ENCODE measurements at regions of chr1 and their contacts with region 1.

Region 1: GRCh38 chr1:240027059-240027462 is 64.6 kb upstream of the FMN2 start:
- DNase-seq: peak; percentile 22
- ATAC-seq: peak; percentile 82
- H3K4me3 ChIP-seq: no peak overlapping the region
- H3K27ac ChIP-seq: no peak overlapping the region
- H3K4me1 ChIP-seq: no peaks in the 10 kb centered on the region
- H3K27me3 ChIP-seq: no peaks in the 10 kb centered on the region
- CTCF ChIP-seq: peak; percentile 93

Region 2: GRCh38 chr1:239763850-239764249 is 263.2 kb before region 1 on chr1:
- CTCF ChIA-PET with region 1: no interaction called
- POLR2A ChIA-PET with region 1: no interaction called
- in situ Hi-C with region 1: no loop called
- intact Hi-C with region 1: no loop called
- DNase-seq: no peak
- ATAC-seq: no peak
- H3K4me3 ChIP-seq: no peak overlapping the region
- H3K27ac ChIP-seq: no peak overlapping the region
- H3K4me1 ChIP-seq: no peaks in the 10 kb centered on the region
- H3K27me3 ChIP-seq: no peaks in the 10 kb centered on the region
- CTCF ChIP-seq: no peak

Region 3: GRCh38 chr1:239841631-239842030 is 185.4 kb before region 1 on chr1:
- CTCF ChIA-PET with region 1: no interaction called
- POLR2A ChIA-PET with region 1: no interaction called
- in situ Hi-C with region 1: no loop called
- intact Hi-C with region 1: no loop called
- DNase-seq: no peak
- ATAC-seq: no peak
- H3K4me3 ChIP-seq: no peak overlapping the region
- H3K27ac ChIP-seq: no peak overlapping the region
- H3K4me1 ChIP-seq: no peaks in the 10 kb centered on the region
- H3K27me3 ChIP-seq: no peaks in the 10 kb centered on the region
- CTCF ChIP-seq: no peak

Region 4: GRCh38 chr1:240122639-240123613 is 95.9 kb after region 1 on chr1:
- CTCF ChIA-PET with region 1: no interaction called
- POLR2A ChIA-PET with region 1: no interaction called
- in situ Hi-C with region 1: no loop called
- intact Hi-C with region 1: no loop called
- DNase-seq: no peak
- ATAC-seq: peak; percentile 53
- H3K4me3 ChIP-seq: no peak overlapping the region; a peak in 1 of 4 replicates
- H3K27ac ChIP-seq: no peak overlapping the region
- H3K4me1 ChIP-seq: no peaks in the 10 kb centered on the region
- H3K27me3 ChIP-seq: no peaks in the 10 kb centered on the region
- CTCF ChIP-seq: no peak

Region 5: DNA sequence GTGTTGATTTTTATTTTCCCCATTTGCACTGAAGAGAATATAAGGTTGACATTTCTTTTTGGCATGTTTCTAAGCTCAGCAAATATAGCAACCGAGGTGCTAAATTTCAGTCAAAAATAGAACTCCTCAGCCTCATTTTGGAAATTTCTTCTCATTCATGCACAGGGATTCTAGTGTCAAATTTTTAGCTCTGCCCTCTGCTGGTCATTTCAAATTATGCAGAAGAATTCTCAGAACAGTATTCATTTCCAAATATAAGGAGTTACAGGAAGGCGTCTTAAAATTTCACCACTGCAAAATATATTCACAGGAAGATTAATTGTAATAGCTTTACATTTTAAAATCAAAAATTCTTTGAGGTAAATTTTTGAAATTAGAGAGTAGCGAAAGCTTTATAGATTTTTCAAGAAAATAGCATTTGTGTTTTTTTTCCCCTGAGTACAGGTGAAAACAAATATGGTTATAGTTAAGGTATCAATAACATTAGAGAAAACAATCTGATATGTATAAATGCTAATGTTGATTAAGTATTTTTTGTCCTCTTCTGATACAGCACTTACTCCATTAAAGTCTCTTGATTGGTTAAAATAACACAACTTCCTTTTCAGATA is 122.5 kb after region 1 on chr1:
- CTCF ChIA-PET with region 1: interaction called, 3 read pairs
- POLR2A ChIA-PET with region 1: no interaction called
- in situ Hi-C with region 1: no loop called
- intact Hi-C with region 1: loop called (anchors 1 kb)
- DNase-seq: peak; percentile 10
- ATAC-seq: no peak
- H3K4me3 ChIP-seq: no peak overlapping the region
- H3K27ac ChIP-seq: no peak overlapping the region
- H3K4me1 ChIP-seq: no peaks in the 10 kb centered on the region
- H3K27me3 ChIP-seq: no peaks in the 10 kb centered on the region
- CTCF ChIP-seq: peak; percentile 70; the same call in 1 of the 2 replicates

Region 6: GRCh38 chr1:240190881-240191401 is 163.9 kb after region 1 on chr1:
- CTCF ChIA-PET with region 1: interaction called, 8 read pairs
- POLR2A ChIA-PET with region 1: no interaction called
- in situ Hi-C with region 1: no loop called
- intact Hi-C with region 1: loop called (anchors 2 kb)
- DNase-seq: no peak
- ATAC-seq: no peak
- H3K4me3 ChIP-seq: no peak overlapping the region
- H3K27ac ChIP-seq: no peak overlapping the region
- H3K4me1 ChIP-seq: no peaks in the 10 kb centered on the region
- H3K27me3 ChIP-seq: peaks cover 5% of the 10 kb centered on the region; the same call in 1 of the 2 replicates
- CTCF ChIP-seq: peak; percentile 62

Region 7: GRCh38 chr1:240414237-240414636 is 387.2 kb after region 1 on chr1:
- CTCF ChIA-PET with region 1: no interaction called
- POLR2A ChIA-PET with region 1: no interaction called
- in situ Hi-C with region 1: no loop called
- intact Hi-C with region 1: no loop called
- DNase-seq: no peak
- ATAC-seq: no peak
- H3K4me3 ChIP-seq: no peak overlapping the region
- H3K27ac ChIP-seq: no peak overlapping the region
- H3K4me1 ChIP-seq: no peaks in the 10 kb centered on the region
- H3K27me3 ChIP-seq: no peaks in the 10 kb centered on the region
- CTCF ChIP-seq: no peak

Region 8: DNA sequence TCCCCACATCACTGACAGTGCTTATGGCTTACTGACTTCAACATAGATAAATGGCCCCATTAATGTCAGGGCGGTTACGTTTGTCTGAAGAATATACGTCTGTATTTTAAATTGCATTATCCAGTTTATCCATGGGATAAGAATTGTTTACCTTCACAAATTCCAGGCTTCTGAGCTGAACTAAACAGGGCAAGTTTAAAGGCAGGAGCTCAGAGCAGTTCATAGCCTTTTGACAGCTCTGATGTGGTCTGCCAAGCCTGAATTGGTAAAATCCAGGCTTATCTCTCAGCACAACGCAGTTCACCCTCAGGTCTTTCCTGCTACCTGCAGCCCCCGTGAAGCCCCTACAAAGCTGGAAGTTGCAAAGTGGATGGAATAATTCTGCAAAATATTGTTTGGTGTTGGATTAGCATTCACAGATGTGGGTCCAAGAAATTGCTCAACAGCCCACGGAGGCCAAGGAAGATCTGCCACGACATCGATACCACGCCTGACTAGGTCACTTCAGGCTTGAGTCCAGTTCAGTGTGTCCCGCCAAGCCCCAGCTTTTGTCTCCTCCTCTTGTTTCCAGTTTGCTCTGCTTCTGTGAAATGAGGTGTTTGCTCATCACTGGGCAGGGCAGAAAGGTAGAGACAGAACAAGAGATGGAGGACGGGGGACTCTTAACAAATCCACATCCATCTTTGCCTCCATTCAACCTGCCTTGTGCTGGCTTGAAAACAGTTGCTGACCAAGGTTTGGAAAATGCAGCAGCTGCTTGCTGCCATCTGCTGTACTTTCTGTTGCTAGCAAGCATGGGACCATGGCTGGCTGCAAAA is 664.7 kb after region 1 on chr1:
- CTCF ChIA-PET with region 1: no interaction called
- POLR2A ChIA-PET with region 1: no interaction called
- in situ Hi-C with region 1: no loop called
- intact Hi-C with region 1: loop called (anchors 10 kb)
- DNase-seq: peak; percentile 13
- ATAC-seq: peak; percentile 80
- H3K4me3 ChIP-seq: no peak overlapping the region
- H3K27ac ChIP-seq: no peak overlapping the region
- H3K4me1 ChIP-seq: no peaks in the 10 kb centered on the region
- H3K27me3 ChIP-seq: no peaks in the 10 kb centered on the region
- CTCF ChIP-seq: peak; percentile 77

Measured in Panc1 (cell line).